ENCODE measurements at regions of chr1 and their contacts with region 1.

Region 1: GRCh38 chr1:181142096-181142958 is 53.8 kb downstream of the IER5 start:
- DNase-seq: peak; percentile 74 to 92 (median 86)
- ATAC-seq: peak; percentile 100
- H3K4me3 ChIP-seq: no peak overlapping the region
- H3K4me3 Mint-ChIP-seq: no peak overlapping the region
- H3K27ac ChIP-seq: no peak overlapping the region
- H3K27ac Mint-ChIP-seq: no peak overlapping the region
- H3K4me1 ChIP-seq: peaks cover 31% of the 10 kb centered on the region
- H3K4me1 Mint-ChIP-seq: peaks cover 36% of the 10 kb centered on the region
- H3K27me3 ChIP-seq: no peaks in the 10 kb centered on the region
- H3K27me3 Mint-ChIP-seq: no peaks in the 10 kb centered on the region
- CTCF ChIP-seq: peak; percentile 97

Region 2: DNA sequence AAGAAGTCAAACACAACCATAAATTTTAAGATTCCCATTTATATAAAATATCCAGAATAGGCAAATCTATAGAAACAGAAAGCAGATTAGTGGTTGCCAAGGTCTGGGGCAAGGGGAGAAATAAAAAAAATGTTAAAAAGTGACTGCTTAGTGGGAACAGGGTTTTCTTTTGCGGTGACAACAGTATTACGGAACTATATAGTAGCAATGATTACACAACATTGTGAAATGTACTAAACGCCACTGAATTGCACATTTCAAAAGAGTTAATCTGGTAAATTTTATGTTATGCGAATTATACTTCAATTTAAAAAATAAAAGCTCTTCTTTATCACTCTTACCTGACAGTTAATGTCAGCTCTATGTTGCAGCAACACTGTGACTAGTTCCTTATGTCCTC is 745.2 kb before region 1 on chr1:
- CTCF ChIA-PET with region 1: no interaction called
- POLR2A ChIA-PET with region 1: no interaction called
- intact Hi-C with region 1: no loop called
- DNase-seq: peak in 2 of 14 experiments; percentile 15 to 19
- ATAC-seq: no peak
- H3K4me3 ChIP-seq: no peak overlapping the region
- H3K4me3 Mint-ChIP-seq: no peak overlapping the region
- H3K27ac ChIP-seq: no peak overlapping the region
- H3K27ac Mint-ChIP-seq: no peak overlapping the region
- H3K4me1 ChIP-seq: no peaks in the 10 kb centered on the region
- H3K4me1 Mint-ChIP-seq: peaks cover 10% of the 10 kb centered on the region
- H3K27me3 ChIP-seq: no peaks in the 10 kb centered on the region
- H3K27me3 Mint-ChIP-seq: no peaks in the 10 kb centered on the region
- CTCF ChIP-seq: no peak

Region 3: GRCh38 chr1:180881806-180882509 is 260.4 kb before region 1 on chr1:
- CTCF ChIA-PET with region 1: no interaction called
- POLR2A ChIA-PET with region 1: interaction called, 4 read pairs
- intact Hi-C with region 1: loop called (anchors 1 to 5 kb)
- DNase-seq: peak in 2 of 14 experiments; percentile 8 to 22
- ATAC-seq: no peak
- H3K4me3 ChIP-seq: no peak overlapping the region
- H3K4me3 Mint-ChIP-seq: no peak overlapping the region
- H3K27ac ChIP-seq: no peak overlapping the region
- H3K27ac Mint-ChIP-seq: no peak overlapping the region
- H3K4me1 ChIP-seq: no peaks in the 10 kb centered on the region
- H3K4me1 Mint-ChIP-seq: no peaks in the 10 kb centered on the region
- H3K27me3 ChIP-seq: no peaks in the 10 kb centered on the region
- H3K27me3 Mint-ChIP-seq: no peaks in the 10 kb centered on the region
- CTCF ChIP-seq: no peak

Region 4: DNA sequence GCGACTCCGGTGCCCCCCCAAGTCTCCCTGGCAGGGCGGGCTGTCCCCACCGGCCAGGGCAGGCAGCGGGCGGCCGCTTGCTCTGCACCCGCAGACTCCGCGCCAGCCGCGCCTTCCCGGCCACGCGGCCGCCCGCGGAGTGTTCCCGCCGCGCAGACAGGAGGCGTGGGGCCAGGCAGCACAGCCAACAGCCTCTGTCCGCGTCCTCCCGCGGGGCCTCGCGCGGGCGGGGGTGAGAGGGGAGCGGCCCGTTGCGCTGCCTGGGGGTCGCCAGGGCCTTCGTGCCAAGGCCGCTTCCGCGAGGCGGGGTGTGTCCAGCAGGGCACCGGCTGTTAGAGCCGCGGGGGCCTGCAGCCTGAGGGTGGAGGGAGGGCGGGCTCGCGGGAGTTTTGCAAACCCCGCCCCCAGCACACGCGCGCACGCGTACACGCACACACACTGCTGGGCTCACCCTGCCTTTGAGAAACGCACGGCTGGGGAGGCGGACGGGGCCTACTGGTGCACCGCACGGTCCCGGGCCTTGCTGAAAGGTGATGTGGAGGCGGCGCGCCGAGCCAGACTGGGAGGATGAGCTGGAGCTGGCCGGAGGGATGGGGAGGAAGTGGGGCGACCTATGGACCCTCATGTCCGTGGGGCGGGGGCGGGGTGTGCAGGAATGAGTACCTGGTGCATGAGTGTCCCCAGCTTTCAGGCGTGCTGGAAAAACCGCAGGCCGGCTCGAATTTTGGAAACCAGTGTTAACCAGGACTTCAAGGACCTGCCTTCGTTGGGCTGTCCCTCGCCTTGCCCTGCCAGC is 188.1 kb before region 1 on chr1:
- CTCF ChIA-PET with region 1: no interaction called
- POLR2A ChIA-PET with region 1: no interaction called
- intact Hi-C with region 1: loop called in 1 of 2 experiments (anchors 10 kb)
- DNase-seq: peak; percentile 38 to 89 (median 64)
- ATAC-seq: peak; percentile 95
- H3K4me3 ChIP-seq: peak overlapping the region; percentile 54
- H3K4me3 Mint-ChIP-seq: peak overlapping the region; percentile 72
- H3K27ac ChIP-seq: no peak overlapping the region
- H3K27ac Mint-ChIP-seq: peak overlapping the region; percentile 17
- H3K4me1 ChIP-seq: peaks cover 15% of the 10 kb centered on the region
- H3K4me1 Mint-ChIP-seq: peaks cover 4% of the 10 kb centered on the region
- H3K27me3 ChIP-seq: no peaks in the 10 kb centered on the region
- H3K27me3 Mint-ChIP-seq: no peaks in the 10 kb centered on the region
- CTCF ChIP-seq: no peak

Region 5: DNA sequence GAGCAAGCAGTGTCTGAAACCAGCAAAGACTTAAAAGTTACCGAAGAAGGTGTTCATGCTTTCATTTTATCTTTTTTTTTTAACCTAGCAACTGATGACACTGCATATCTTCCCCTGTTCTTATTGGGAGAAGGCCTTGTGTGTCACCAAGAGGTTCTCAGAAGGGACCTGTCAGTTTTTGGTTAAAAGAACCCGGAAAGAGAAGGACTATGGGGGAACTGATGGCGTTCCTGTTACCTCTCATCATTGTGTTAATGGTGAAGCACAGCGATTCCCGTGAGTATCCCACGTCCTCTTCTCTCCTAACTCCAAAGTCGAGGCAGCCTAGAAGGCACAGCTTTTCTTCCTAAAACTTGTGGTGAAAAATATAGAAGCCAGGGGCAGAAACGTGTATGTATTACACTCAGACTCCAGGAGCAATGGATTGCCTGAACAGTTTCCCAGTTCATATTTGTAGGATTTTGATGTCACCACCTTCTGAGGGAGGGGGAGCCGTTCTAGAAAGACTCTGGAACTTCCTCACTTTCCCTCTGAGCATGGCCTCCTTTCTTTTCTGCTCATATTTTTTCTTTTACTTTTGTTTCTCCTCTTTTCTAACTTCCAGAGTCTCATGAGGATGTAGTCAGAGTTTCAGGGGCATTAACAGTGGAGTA is 108.4 kb before region 1 on chr1 and contains the start of gene MR1:
- CTCF ChIA-PET with region 1: interaction called, 48 read pairs
- POLR2A ChIA-PET with region 1: interaction called, 16 read pairs
- intact Hi-C with region 1: loop called (anchors 1 kb)
- DNase-seq: peak in 8 of 14 experiments; percentile 19 to 92 (median 42)
- ATAC-seq: peak; percentile 97
- H3K4me3 ChIP-seq: peak within 1 kb of the TSS; percentile 78
- H3K4me3 Mint-ChIP-seq: peak within 1 kb of the TSS; percentile 97
- H3K27ac ChIP-seq: peak within 1 kb of the TSS; percentile 87 to 97
- H3K27ac Mint-ChIP-seq: peak within 1 kb of the TSS; percentile 92
- H3K4me1 ChIP-seq: peaks cover 47% of the 10 kb centered on the region
- H3K4me1 Mint-ChIP-seq: peaks cover 64% of the 10 kb centered on the region
- H3K27me3 ChIP-seq: no peaks in the 10 kb centered on the region
- H3K27me3 Mint-ChIP-seq: no peaks in the 10 kb centered on the region
- CTCF ChIP-seq: no peak
- total RNA-seq, gene MR1: 16.2 to 18.1 TPM

Region 6: DNA sequence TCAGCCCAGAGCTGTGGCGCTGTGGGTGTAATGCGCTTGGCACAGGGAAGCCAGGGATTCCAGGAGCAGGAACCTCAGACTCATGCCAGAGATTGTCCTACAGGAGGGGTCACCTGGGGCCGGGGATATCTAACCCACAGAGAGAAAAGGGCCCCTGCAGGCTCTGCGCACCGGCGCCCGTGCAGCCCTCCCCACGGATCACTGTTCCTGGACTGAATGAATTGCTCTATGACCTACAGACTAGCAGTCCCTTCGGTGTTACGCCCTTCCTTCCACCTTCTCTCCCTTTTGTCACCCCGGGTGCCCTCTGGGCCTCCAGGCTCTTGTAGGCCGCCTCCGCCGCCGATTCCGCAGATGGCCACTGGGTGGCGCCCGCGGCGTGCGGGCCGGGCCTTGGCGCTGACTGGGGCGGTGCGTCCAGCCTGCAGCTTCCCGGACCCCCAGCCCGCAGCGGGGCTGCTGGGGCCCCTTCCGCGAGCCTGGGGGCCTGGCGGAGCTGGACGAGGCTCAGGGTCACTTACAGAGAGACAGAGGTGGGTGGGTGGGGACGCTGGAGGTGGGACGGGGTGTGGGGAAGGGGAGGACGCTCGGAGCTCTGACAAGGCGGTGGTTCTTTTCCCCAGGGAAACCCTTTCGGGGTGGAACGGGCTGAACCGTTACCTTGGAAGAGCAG is 47.5 kb after region 1 on chr1:
- CTCF ChIA-PET with region 1: no interaction called
- POLR2A ChIA-PET with region 1: no interaction called
- intact Hi-C with region 1: no loop called
- DNase-seq: peak; percentile 35 to 85 (median 73)
- ATAC-seq: peak; percentile 96
- H3K4me3 ChIP-seq: peak overlapping the region; percentile 20
- H3K4me3 Mint-ChIP-seq: peak overlapping the region; percentile 34
- H3K27ac ChIP-seq: no peak overlapping the region
- H3K27ac Mint-ChIP-seq: no peak overlapping the region
- H3K4me1 ChIP-seq: peaks cover 12% of the 10 kb centered on the region
- H3K4me1 Mint-ChIP-seq: no peaks in the 10 kb centered on the region
- H3K27me3 ChIP-seq: no peaks in the 10 kb centered on the region
- H3K27me3 Mint-ChIP-seq: peaks cover 26% of the 10 kb centered on the region
- CTCF ChIP-seq: peak; percentile 94

Region 7: GRCh38 chr1:181222972-181223505 is 80.7 kb after region 1 on chr1:
- CTCF ChIA-PET with region 1: no interaction called
- POLR2A ChIA-PET with region 1: no interaction called
- intact Hi-C with region 1: no loop called
- DNase-seq: no peak
- ATAC-seq: no peak
- H3K4me3 ChIP-seq: no peak overlapping the region
- H3K4me3 Mint-ChIP-seq: no peak overlapping the region
- H3K27ac ChIP-seq: no peak overlapping the region
- H3K27ac Mint-ChIP-seq: no peak overlapping the region
- H3K4me1 ChIP-seq: no peaks in the 10 kb centered on the region
- H3K4me1 Mint-ChIP-seq: no peaks in the 10 kb centered on the region
- H3K27me3 ChIP-seq: no peaks in the 10 kb centered on the region
- H3K27me3 Mint-ChIP-seq: no peaks in the 10 kb centered on the region
- CTCF ChIP-seq: no peak